CD8-positive, alpha-beta memory T cell (primary cell): ENCODE measurements at regions of chr14 and their contacts with region 1.

Region 1: DNA sequence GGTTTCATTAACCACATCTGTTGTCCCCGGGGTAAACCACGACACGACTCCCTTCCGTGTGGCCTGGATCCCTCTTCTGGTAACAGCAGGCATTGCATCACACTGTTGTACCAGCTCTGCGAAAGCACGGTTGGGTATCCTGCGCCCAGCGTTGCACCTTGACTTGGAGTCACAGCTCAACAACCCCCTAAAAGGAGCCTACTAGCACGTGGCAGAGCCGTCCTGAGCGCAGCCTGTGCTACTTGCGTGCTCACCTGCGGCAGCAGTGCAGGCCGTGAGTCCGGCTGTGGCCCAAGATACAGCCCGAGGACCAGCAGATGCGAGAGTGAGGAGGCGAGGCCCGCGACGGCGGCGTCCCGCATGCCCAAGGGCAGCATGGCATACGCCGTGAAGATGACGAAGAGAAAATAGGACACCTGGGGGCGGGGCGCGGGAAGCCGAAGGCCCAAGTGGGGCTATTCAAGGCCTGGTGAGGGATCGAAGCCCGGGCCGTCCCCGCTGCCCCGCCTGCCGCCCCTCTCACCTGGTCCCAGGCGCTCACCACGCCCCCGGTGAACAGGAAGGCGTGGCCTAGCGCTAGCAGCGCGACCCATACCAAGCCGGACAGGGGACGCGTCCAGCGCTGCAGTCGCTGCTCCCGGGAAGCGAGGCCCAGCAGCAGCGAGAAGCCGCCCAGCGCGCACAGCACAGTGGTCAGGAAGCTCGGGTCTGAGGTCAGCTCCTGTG is 2.4 kb downstream of the ADCY4 start:
- DNase-seq: peak; percentile 70 to 92 (median 85)
- H3K4me3 ChIP-seq: peak overlapping the region; percentile 44
- H3K4me3 Mint-ChIP-seq: peak overlapping the region; percentile 63 to 86 (median 79)
- H3K27ac ChIP-seq: no peak overlapping the region
- H3K27ac Mint-ChIP-seq: peak overlapping the region; percentile 15 to 90 (median 80)
- H3K4me1 ChIP-seq: peaks cover 69% of the 10 kb centered on the region
- H3K4me1 Mint-ChIP-seq: peaks cover 69 to 89% (median 83%) of the 10 kb centered on the region in 3 donors
- H3K27me3 ChIP-seq: peaks cover 17% of the 10 kb centered on the region
- H3K27me3 Mint-ChIP-seq: peaks cover 21 to 27% of the 10 kb centered on the region in 2 donors

Region 2: GRCh38 chr14:24271134-24271833 is 61.1 kb before region 1 on chr14 and contains the start of gene RABGGTA:
- CTCF ChIA-PET with region 1: interaction called, 22 read pairs
- POLR2A ChIA-PET with region 1: interaction called, 4 read pairs
- DNase-seq: peak; percentile 87 to 98 (median 96)
- H3K4me3 ChIP-seq: peak within 1 kb of the TSS; percentile 63
- H3K4me3 Mint-ChIP-seq: peak within 1 kb of the TSS; percentile 88 to 93 (median 92)
- H3K27ac ChIP-seq: peak within 1 kb of the TSS; percentile 86
- H3K27ac Mint-ChIP-seq: peak within 1 kb of the TSS; percentile 96 to 99 (median 98)
- H3K4me1 ChIP-seq: peaks cover 30% of the 10 kb centered on the region
- H3K4me1 Mint-ChIP-seq: peaks cover 37 to 44% (median 41%) of the 10 kb centered on the region in 3 donors
- H3K27me3 ChIP-seq: no peaks in the 10 kb centered on the region
- H3K27me3 Mint-ChIP-seq: peaks cover 0 to 5% of the 10 kb centered on the region in 2 donors
- total RNA-seq, gene RABGGTA: 41.0 to 41.8 TPM

Region 3: DNA sequence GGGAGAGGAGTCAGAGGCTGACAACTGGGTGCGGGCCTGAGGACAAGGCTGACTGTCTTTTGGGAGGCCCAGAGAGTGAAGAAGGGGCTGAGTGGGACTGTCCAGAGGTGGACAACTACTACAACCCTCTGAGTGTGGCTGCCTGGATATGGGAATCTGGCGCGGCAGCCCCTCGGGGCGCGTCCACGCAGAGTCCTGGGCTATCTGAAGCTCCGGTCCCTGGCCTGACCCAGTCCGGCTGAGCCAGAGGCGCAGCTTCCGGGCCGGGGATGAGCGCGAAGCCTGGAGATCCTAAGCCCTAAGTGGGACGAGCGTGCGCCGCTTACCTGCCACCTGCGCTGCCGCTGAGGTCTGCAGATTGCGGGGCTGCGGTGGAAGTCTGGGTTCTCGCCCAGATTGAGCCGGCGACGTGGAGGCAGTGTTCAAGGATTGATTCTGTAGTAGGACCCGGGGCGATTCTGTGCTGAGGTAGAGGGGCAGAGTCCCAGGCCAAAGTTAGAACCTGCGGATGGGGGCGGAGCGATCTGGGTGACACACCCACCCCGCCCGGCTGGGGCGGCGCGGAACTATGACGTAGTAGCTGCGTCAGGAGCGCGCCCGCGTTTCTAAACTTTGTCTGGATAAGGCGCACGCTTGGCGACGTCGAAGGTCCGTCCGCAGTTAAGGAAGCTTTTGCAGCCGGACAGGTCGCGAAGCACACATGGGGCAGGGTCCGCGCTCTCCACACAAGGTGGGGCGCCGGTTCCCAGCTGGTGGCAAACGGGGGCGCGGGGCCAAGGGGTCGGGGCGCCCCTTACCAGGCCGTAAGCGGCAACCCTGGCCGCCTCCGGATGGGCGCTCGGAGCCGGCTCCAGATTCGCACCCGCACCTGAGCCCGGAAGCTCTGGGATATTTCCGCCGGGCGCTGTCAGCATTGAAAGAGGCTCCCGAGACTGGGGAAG is 32.9 kb before region 1 on chr14 and contains the starts of genes DHRS1 and NOP9:
- CTCF ChIA-PET with region 1: interaction called, 265 read pairs
- POLR2A ChIA-PET with region 1: no interaction called
- DNase-seq: peak; percentile 87 to 93 (median 89)
- H3K4me3 ChIP-seq: peak within 1 kb of the TSS; percentile 83
- H3K4me3 Mint-ChIP-seq: peak within 1 kb of the TSS; percentile 89 to 97 (median 92)
- H3K27ac ChIP-seq: peak within 1 kb of the TSS; percentile 79
- H3K27ac Mint-ChIP-seq: peak within 1 kb of the TSS; percentile 94 to 99 (median 96)
- H3K4me1 ChIP-seq: peaks cover 47% of the 10 kb centered on the region
- H3K4me1 Mint-ChIP-seq: peaks cover 41 to 59% (median 54%) of the 10 kb centered on the region in 3 donors
- H3K27me3 ChIP-seq: no peaks in the 10 kb centered on the region
- H3K27me3 Mint-ChIP-seq: no peaks in the 10 kb centered on the region
- total RNA-seq, gene DHRS1: 9.3 to 9.8 TPM
- total RNA-seq, gene NOP9: 44.1 to 47.1 TPM

Region 4: GRCh38 chr14:24321212-24321975 is 11.0 kb before region 1 on chr14:
- CTCF ChIA-PET with region 1: interaction called, 35 read pairs
- POLR2A ChIA-PET with region 1: no interaction called
- DNase-seq: no peak
- H3K4me3 ChIP-seq: no peak overlapping the region
- H3K4me3 Mint-ChIP-seq: no peak overlapping the region
- H3K27ac ChIP-seq: no peak overlapping the region
- H3K27ac Mint-ChIP-seq: no peak overlapping the region
- H3K4me1 ChIP-seq: no peaks in the 10 kb centered on the region
- H3K4me1 Mint-ChIP-seq: peaks cover 0 to 8% (median 8%) of the 10 kb centered on the region in 3 donors
- H3K27me3 ChIP-seq: no peaks in the 10 kb centered on the region
- H3K27me3 Mint-ChIP-seq: peaks cover 2 to 5% of the 10 kb centered on the region in 2 donors

Region 5: DNA sequence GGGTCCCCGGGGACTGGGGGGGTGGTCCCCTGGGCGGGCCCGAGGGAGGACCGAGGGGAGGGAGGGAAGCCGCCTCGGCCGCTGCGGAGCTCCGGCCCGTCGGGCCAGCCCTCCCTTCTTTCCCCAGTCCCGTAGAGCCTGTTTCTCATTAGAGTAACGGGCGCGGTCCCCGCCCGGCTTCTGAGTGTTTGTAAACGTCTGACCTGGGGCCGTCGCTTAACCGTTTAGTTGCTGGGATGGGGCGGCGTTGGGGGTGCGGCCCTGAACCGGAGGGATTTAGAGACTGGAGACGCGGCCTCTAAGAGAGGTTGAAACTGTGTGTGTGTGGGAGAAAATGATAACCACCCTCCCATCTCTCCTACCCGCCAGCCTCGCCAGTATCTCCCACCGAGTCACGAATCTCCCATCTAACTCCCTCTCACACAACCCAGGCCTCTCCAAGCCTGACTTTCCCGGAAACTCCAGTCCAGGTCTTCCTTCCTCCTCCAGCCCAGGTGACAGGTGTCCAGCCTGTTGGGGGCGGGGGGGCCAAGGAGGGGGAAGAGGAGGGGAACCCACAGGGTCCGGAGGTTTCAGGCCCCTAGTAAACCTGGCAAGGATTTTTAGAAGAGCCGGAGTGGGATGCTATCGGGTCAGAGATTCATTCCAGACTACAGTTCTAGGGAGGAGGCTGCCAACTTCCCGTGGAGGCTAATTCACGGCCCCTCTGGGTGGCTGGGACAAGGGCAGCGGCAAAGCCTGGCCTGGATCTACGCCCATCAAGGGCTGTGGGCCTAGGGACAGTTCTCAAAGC is 34.5 kb after region 1 on chr14:
- CTCF ChIA-PET with region 1: interaction called, 10 read pairs
- POLR2A ChIA-PET with region 1: no interaction called
- DNase-seq: peak in 3 of 5 donors; percentile 16 to 48 (median 27)
- H3K4me3 ChIP-seq: peak overlapping the region; percentile 28
- H3K4me3 Mint-ChIP-seq: peak overlapping the region in 6 of 7 donors; percentile 27 to 76 (median 74)
- H3K27ac ChIP-seq: peak overlapping the region; percentile 20
- H3K27ac Mint-ChIP-seq: peak overlapping the region in 3 of 8 donors; percentile 27 to 86 (median 69)
- H3K4me1 ChIP-seq: peaks cover 30% of the 10 kb centered on the region
- H3K4me1 Mint-ChIP-seq: peaks cover 28 to 36% (median 34%) of the 10 kb centered on the region in 3 donors
- H3K27me3 ChIP-seq: peaks cover 45% of the 10 kb centered on the region
- H3K27me3 Mint-ChIP-seq: peaks cover 38 to 52% of the 10 kb centered on the region in 2 donors

Region 6: DNA sequence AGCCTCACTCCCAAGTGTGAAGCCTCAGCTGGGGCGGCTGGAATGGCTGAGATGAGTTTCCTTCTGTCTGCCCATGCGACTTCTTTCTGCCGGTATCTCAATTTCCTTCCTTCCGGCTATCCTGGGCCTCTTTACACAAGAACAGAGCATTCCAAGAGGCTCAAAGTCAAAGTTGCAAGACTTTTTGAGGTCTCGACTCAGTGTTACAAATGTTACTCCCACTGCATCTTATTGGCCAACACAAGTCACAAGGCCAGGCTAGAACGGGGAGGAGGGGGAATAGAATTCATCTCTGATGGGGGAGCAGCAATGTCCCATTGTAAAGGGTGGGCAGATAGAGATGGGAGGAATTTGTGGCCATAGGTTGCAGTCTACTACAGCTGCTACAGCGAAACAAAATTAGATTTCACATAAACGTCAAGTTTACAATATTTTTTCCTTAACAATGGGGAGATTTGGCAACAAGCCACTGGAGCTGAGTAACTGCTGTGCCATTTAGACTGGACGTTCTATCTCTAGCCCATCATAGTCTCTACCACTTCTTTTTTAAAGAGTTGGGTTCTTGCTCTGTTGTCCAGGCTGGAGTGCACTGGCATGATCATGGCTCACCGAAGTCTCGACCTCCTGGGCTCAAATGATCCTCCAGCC is 56.9 kb after region 1 on chr14:
- CTCF ChIA-PET with region 1: no interaction called
- POLR2A ChIA-PET with region 1: no interaction called
- DNase-seq: no peak
- H3K4me3 ChIP-seq: no peak overlapping the region
- H3K4me3 Mint-ChIP-seq: no peak overlapping the region
- H3K27ac ChIP-seq: no peak overlapping the region
- H3K27ac Mint-ChIP-seq: no peak overlapping the region
- H3K4me1 ChIP-seq: no peaks in the 10 kb centered on the region
- H3K4me1 Mint-ChIP-seq: no peaks in the 10 kb centered on the region
- H3K27me3 ChIP-seq: peaks cover 3% of the 10 kb centered on the region
- H3K27me3 Mint-ChIP-seq: peaks cover 15 to 35% of the 10 kb centered on the region in 2 donors

Region 7: GRCh38 chr14:24408764-24409163 is 76.3 kb after region 1 on chr14:
- CTCF ChIA-PET with region 1: interaction called, 10 read pairs
- POLR2A ChIA-PET with region 1: no interaction called
- DNase-seq: no peak
- H3K4me3 ChIP-seq: no peak overlapping the region
- H3K4me3 Mint-ChIP-seq: no peak overlapping the region
- H3K27ac ChIP-seq: no peak overlapping the region
- H3K27ac Mint-ChIP-seq: no peak overlapping the region
- H3K4me1 ChIP-seq: no peaks in the 10 kb centered on the region
- H3K4me1 Mint-ChIP-seq: no peaks in the 10 kb centered on the region
- H3K27me3 ChIP-seq: peaks cover 3% of the 10 kb centered on the region
- H3K27me3 Mint-ChIP-seq: peaks cover 19 to 35% of the 10 kb centered on the region in 2 donors